Dorsolateral prefrontal cortex (tissue), 120 donors: ENCODE measurements at regions of chr18 and their contacts with region 1.

Region 1: GRCh38 chr18:77000527-77000926 is 132.1 kb downstream of the MBP start:
- DNase-seq: peak in 7 of 10 donors; percentile 37 to 70 (median 51)
- H3K4me3 ChIP-seq: peak overlapping the region in 49 of 59 donors; percentile 7 to 84 (median 37)
- H3K27ac ChIP-seq: peak overlapping the region in 51 of 59 donors; percentile 7 to 99 (median 63)
- H3K27me3 ChIP-seq: no peaks in the 10 kb centered on the region
- CTCF ChIP-seq: peak; percentile 87 to 100 (median 95)

Region 2: DNA sequence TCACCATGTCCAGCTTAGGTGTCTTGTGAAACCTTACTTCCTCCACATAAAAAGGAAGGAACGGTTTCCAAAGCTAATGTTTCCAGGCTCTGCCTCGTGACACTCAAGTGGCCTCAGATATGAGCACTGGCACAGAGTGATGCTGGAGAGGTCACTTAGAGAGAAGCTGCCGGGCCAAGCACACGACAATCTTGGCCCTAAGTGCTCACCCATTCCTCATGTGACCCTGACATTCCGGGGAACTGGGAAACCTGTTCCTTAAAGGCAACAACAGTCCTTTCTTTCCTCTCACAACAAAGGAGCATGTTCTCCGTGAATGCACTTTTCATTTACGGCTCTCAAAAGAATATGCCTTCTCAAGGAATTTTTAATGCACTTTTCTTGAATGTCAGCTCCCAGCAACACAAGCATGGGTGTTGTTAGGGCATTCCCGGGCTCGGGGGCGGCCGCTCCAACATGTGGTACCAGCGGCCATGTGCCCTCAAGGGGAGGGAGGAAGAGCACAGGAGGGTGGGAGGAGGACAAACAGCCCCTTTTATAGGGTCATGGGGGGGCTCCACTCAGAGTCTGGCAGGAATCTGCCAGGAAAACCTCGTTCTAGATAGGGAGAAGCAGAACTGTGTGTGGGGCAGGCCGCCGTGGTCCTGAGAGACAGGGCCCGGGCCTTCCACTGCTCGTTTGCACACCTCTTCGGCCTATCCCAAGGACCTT is 13.4 kb after region 1 on chr18:
- intact Hi-C with region 1: loop called in 1 of 2 experiments (anchors 1 kb)
- DNase-seq: peak in 3 of 10 donors; percentile 43 to 65 (median 48)
- H3K4me3 ChIP-seq: peak overlapping the region; percentile 4 to 84 (median 61)
- H3K27ac ChIP-seq: peak overlapping the region in 57 of 59 donors; percentile 2 to 99 (median 90)
- H3K27me3 ChIP-seq: no peaks in the 10 kb centered on the region
- CTCF ChIP-seq: peak in 2 of 56 donors; percentile 8 to 19

Region 3: DNA sequence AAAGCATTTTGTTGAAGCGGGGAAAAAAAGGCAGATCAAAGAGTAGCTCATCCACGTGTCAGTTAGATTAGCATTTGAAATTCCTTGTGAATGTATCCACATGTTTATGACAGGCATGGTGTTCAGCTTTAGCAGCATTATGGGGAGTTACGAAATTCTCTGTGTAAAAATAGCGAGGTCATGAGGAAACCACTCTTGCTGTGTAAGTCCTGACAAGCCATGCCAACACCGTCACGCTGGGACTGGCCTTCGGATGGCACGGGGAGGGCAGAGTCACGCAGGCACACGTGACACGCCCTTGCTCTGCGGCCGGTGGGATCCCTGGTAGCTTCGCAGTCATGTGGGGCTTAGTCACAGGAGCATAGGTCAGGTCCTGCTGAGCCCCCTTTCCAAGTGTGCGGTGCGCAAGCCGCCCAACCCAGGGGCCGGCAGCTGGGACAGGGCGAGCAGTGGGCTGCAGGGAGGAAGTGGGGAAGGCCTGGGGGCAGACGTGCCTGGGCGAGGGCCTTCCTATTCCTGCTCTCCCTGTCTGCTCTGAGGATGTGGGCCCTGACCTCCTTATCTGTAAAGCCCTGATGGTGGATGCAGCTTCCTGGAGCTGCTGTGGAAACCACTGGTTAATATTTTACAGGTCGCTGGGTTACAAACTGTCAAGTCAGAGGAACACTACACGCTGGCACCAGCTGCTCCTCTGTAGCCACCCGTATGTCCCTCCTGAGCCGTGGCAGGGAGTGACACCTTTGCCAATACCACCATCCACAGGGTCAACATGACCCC is 114.1 kb after region 1 on chr18:
- intact Hi-C with region 1: no loop called
- DNase-seq: peak in 4 of 10 donors; percentile 56 to 72 (median 63)
- H3K4me3 ChIP-seq: no peak overlapping the region
- H3K27ac ChIP-seq: peak overlapping the region in 49 of 59 donors; percentile 10 to 89 (median 68)
- H3K27me3 ChIP-seq: no peaks in the 10 kb centered on the region
- CTCF ChIP-seq: no peak

Region 4: GRCh38 chr18:77207540-77207939 is 207.0 kb after region 1 on chr18:
- intact Hi-C with region 1: loop called in 1 of 2 experiments (anchors 5 kb)
- DNase-seq: peak in 1 of 10 donors; percentile 44
- H3K4me3 ChIP-seq: peak overlapping the region in 23 of 59 donors; percentile 1 to 51 (median 20)
- H3K27ac ChIP-seq: peak overlapping the region in 3 of 59 donors; percentile 17 to 54 (median 36)
- H3K27me3 ChIP-seq: no peaks in the 10 kb centered on the region
- CTCF ChIP-seq: peak in 55 of 56 donors; percentile 14 to 74 (median 55)

Region 5: DNA sequence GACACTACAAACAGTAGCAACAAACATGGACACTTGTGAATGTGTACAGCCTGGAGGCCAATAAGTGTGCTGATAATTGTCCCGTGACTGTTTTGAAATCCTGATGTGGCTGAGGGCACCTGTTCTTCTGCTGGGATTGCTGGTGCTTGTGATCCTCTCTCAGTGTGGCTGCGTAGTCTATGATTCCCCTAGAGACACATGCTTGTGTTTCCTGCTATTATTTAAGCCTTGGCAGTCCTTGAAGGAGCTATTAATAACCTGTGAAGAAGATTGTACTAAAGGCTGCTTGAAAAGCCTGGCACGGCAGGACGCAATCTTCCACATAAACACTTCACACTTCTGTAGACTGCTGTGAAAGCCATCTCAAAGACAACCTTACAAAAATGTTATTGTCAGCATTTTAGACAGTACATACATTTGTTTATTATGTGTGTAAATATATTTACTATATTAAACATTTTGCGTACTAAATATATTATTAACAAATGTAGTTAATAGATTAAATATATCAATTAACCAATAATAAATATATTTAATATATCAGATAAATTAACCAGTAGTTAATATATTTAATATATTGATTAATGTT is 320.5 kb after region 1 on chr18:
- intact Hi-C with region 1: no loop called
- DNase-seq: no peak
- H3K4me3 ChIP-seq: no peak overlapping the region
- H3K27ac ChIP-seq: no peak overlapping the region
- H3K27me3 ChIP-seq: peaks cover 0 to 17% (median 0%) of the 10 kb centered on the region in 45 donors
- CTCF ChIP-seq: no peak